Mammary epithelial cell (primary cell): ENCODE measurements at regions of chr14 and their contacts with region 1.

Region 1: DNA sequence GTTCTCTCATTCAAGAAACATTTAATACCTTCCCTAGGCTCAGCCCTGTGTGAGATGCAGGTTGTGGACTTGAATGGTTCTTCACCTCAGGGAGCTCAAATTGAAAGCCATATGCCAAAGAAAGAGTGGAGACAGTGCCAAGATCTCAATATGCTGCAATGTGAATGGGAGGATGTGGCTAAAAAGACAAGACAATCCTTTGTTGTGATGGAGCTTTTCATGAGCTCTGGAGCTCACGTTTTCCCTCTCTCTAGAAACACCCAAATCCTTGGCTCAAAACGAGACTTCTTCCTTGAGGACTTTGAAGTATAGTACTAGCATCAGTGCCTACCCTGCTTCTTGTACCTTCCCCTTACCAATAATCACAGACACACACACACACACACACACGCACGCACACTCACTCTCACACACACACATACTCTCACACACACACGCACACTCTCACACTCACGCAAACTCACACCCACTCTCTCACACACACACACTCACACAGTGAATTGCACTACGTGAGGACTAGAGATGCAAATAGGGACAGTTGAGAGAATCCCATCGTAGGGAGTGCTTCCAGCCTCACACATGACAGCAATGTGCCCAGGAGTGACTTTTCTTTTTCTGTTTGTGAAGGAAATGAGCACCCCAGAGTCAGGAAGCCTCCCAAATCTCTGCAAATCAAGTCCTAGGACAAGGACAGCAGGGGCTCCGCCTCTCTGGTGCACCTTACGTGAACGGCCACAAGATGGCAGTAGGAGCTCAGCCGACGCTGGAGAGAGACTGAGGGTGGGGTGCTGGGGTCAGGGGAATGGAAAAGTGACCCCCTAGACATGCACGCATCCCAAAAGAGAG is 231.4 kb downstream of the PCNX1 start:
- DNase-seq: peak; percentile 31
- H3K4me3 ChIP-seq: no peak overlapping the region
- H3K27ac ChIP-seq: no peak overlapping the region
- H3K4me1 ChIP-seq: peaks cover 29% of the 10 kb centered on the region
- H3K27me3 ChIP-seq: no peaks in the 10 kb centered on the region
- CTCF ChIP-seq: peak; percentile 89 to 98

Region 2: DNA sequence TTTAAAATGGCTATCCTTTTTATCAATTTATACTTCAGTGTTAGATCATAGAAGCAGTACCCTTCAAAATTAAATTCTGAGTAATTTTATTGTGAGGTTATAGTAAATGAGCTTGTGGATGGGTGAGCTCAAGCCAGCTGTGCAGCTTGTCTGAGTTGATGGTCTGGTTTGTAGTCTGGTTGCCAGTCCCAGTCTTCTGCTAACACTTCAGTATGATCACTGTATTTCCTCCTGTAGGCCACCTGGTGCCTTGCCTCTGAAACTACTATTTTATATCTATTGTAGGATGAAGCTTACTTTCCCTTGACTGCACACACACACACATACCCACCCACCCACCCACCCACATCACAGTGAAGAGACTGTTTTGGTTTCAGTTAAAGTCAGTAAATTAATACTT is 265.0 kb after region 1 on chr14:
- CTCF ChIA-PET with region 1: no interaction called
- dilution Hi-C with region 1: no loop called
- in situ Hi-C with region 1: no loop called
- intact Hi-C with region 1: loop called (anchors 2 kb)
- DNase-seq: peak; percentile 23
- H3K4me3 ChIP-seq: no peak overlapping the region
- H3K27ac ChIP-seq: no peak overlapping the region
- H3K4me1 ChIP-seq: peaks cover 13% of the 10 kb centered on the region
- H3K27me3 ChIP-seq: no peaks in the 10 kb centered on the region
- CTCF ChIP-seq: peak in 1 of 2 donors; percentile 37

Region 3: GRCh38 chr14:71720978-71721624 is 582.4 kb after region 1 on chr14:
- CTCF ChIA-PET with region 1: no interaction called
- dilution Hi-C with region 1: no loop called
- in situ Hi-C with region 1: no loop called
- intact Hi-C with region 1: loop called (anchors 1 kb)
- DNase-seq: peak; percentile 86
- H3K4me3 ChIP-seq: no peak overlapping the region
- H3K27ac ChIP-seq: no peak overlapping the region
- H3K4me1 ChIP-seq: peaks cover 19% of the 10 kb centered on the region
- H3K27me3 ChIP-seq: no peaks in the 10 kb centered on the region
- CTCF ChIP-seq: peak; percentile 48 to 79

Region 4: DNA sequence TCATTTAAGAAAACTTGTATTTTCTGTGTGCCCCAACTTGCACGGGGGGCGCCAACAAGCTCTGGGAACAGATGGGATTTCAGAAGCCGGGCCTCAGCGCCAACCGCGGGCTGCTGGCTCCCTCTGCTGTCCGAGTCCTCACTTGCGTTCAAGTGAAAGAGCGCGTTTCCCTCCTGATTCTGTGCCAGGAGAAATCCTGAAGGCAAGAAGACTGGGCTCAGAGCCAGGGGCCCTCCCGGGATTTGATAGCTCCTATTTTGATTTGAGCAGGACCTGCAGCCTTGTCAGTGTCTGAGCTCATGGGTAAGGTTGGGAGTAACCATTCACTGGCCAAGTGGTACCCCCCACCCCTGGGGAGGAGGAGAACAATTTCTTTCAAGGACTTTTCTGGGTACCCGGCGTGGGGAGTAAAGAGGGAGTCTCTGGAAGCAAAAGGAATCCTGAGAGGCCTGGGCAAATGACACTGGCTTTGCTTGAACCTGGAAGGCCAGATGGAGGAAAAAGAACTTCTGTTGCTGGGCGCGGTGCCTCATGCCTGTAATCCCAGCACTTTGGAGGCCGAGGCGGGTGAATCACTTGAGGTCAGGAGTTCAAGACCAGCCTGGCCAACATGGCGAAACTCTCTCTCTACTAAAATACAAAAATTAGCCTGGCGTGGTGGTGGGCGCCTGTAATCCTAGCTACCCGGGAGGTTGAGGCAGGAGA is 614.6 kb after region 1 on chr14:
- CTCF ChIA-PET with region 1: no interaction called
- dilution Hi-C with region 1: no loop called
- in situ Hi-C with region 1: loop called (anchors 10 kb)
- intact Hi-C with region 1: loop called (anchors 1 kb)
- DNase-seq: peak; percentile 68
- H3K4me3 ChIP-seq: no peak overlapping the region
- H3K27ac ChIP-seq: no peak overlapping the region
- H3K4me1 ChIP-seq: peaks cover 11% of the 10 kb centered on the region
- H3K27me3 ChIP-seq: no peaks in the 10 kb centered on the region
- CTCF ChIP-seq: peak; percentile 82 to 96

Region 5: DNA sequence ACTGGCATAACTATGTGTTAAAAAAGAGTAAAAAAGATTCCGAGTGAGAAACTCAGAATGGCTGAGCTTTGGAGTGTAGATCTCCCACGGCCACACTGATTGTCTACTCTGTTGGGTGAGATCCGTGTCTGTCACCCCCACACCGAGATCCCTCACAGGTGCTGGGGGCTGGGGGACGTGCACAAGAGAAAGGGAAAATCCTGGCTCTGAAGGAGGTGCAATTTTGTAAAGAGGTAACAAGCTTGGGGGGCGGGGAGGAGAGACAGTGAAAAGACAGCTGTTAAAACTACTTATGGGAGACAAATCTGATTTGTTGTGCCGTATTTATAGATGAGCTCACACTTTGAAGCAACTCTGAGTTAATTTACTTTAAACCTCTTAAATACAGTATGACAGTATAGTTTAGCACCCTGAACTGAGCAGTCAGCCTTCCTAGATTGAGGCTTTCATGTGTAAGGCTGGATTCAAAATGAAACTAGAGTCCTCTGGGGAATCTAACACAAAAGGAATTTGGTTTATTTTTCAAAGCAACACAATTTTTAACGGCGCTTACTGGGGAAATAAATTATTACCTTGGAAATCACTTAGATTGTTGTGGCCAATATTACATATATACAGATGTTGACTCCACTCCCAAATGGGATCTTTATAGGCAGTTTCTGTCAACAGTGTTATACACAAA is 626.2 kb after region 1 on chr14:
- CTCF ChIA-PET with region 1: no interaction called
- dilution Hi-C with region 1: loop called (anchors 10 kb)
- in situ Hi-C with region 1: no loop called
- intact Hi-C with region 1: no loop called
- DNase-seq: no peak
- H3K4me3 ChIP-seq: no peak overlapping the region
- H3K27ac ChIP-seq: no peak overlapping the region
- H3K4me1 ChIP-seq: no peaks in the 10 kb centered on the region
- H3K27me3 ChIP-seq: no peaks in the 10 kb centered on the region
- CTCF ChIP-seq: no peak

Region 6: GRCh38 chr14:71855399-71856036 is 716.8 kb after region 1 on chr14:
- CTCF ChIA-PET with region 1: interaction called, 4 read pairs
- dilution Hi-C with region 1: no loop called
- in situ Hi-C with region 1: loop called in 1 of 2 experiments (anchors 10 kb)
- intact Hi-C with region 1: loop called (anchors 1 kb)
- DNase-seq: peak; percentile 56
- H3K4me3 ChIP-seq: no peak overlapping the region
- H3K27ac ChIP-seq: no peak overlapping the region
- H3K4me1 ChIP-seq: no peaks in the 10 kb centered on the region
- H3K27me3 ChIP-seq: no peaks in the 10 kb centered on the region
- CTCF ChIP-seq: peak; percentile 75 to 86

Region 7: GRCh38 chr14:72420725-72421474 is 1282.2 kb after region 1 on chr14:
- CTCF ChIA-PET with region 1: no interaction called
- dilution Hi-C with region 1: no loop called
- in situ Hi-C with region 1: loop called in 1 of 2 experiments (anchors 25 kb)
- intact Hi-C with region 1: no loop called
- DNase-seq: peak; percentile 38
- H3K4me3 ChIP-seq: no peak overlapping the region
- H3K27ac ChIP-seq: no peak overlapping the region
- H3K4me1 ChIP-seq: no peaks in the 10 kb centered on the region
- H3K27me3 ChIP-seq: no peaks in the 10 kb centered on the region
- CTCF ChIP-seq: peak; percentile 96 to 99